Activated T-helper 2 cell treated with anti-CD3 and anti-CD28 coated beads, Interferon-gamma antibody, Interleukin-2, Interleukin-4, amounts not matched to agents 10 μg/mL and 5 μg/mL and 100 μg/mL, durations not matched to agents 14 hours and 24 hours and 36 hours (primary cell): ENCODE measurements at regions of chr4 and their contacts with region 1.

Region 1: GRCh38 chr4:150970685-150971151 is 44.4 kb downstream of the LRBA start:
- DNase-seq: no peak
- H3K4me3 Mint-ChIP-seq: no peak overlapping the region
- H3K27ac Mint-ChIP-seq: peak overlapping the region; percentile 68
- H3K4me1 Mint-ChIP-seq: peaks cover 40% of the 10 kb centered on the region
- H3K27me3 Mint-ChIP-seq: no peaks in the 10 kb centered on the region

Region 2: DNA sequence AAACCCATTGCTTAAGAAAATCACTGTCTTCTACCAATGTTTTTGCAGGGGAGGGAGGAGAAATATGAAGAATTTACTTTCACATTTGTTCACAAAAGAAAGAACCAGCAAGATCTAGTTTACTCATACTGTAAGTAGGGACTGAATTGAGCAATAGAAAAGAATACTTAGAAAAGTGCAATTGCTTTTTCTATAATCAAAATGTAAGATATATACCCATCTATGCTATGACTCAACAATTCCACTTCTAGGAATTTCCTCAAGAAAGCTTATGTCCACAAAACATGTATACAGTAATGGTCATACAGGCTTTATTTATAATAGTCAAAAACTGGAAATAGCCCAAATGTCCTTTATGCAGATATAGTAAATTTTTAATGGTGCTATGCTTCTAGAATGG is 152.1 kb before region 1 on chr4:
- intact Hi-C with region 1: loop called (anchors 5 kb)
- DNase-seq: no peak
- H3K4me3 Mint-ChIP-seq: no peak overlapping the region
- H3K27ac Mint-ChIP-seq: no peak overlapping the region
- H3K4me1 Mint-ChIP-seq: peaks cover 15% of the 10 kb centered on the region
- H3K27me3 Mint-ChIP-seq: no peaks in the 10 kb centered on the region

Region 3: GRCh38 chr4:150886599-150886998 is 84.1 kb before region 1 on chr4:
- intact Hi-C with region 1: no loop called
- DNase-seq: no peak
- H3K4me3 Mint-ChIP-seq: no peak overlapping the region
- H3K27ac Mint-ChIP-seq: no peak overlapping the region
- H3K4me1 Mint-ChIP-seq: peaks cover 18% of the 10 kb centered on the region
- H3K27me3 Mint-ChIP-seq: no peaks in the 10 kb centered on the region

Region 4: DNA sequence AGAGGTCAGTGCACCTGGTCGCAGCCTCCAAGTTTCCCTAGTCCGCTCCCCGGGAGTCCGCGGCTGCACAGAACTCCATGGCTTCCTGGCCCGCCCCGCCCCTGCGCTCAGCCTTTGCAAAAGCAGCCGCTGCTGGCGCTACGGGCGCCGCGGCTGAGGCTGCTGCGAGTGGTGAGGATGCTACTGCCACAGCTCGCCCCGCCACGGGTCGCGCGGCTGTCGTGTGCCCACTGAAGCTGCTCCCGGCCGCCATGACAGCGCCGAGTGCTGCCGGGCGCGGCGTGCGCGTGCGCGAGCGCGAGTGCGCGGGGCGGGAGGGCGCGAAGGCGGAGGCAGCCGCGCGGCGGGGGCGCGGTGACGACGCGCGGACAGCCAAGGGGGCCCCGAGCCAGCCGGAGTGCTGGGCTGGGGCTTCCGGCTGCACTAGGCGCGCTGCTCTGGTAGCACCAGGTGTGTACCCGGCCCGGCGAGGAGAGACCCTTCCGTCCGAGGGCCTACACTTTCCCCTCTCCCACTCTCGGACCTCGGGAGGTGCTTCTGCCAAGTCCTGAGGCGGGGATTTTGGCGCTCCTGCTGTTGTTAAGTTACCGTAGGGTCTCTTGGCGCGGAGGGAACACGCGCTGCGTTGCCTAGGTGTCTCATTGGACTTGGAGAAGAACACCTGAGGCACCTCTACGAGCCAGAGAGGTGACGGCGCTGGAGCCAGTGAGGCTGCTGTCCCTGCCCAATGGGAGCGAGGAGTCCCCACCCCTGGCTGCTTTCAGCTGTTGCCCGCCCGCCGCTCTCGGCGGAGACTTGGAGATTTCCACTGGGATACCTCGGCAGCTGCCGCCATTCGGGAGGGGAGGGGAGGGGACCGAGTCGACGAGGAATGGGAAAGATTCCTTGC is 45.0 kb after region 1 on chr4:
- intact Hi-C with region 1: loop called (anchors 1 kb)
- DNase-seq: peak; percentile 76
- H3K4me3 Mint-ChIP-seq: peak overlapping the region; percentile 100
- H3K27ac Mint-ChIP-seq: peak overlapping the region; percentile 99
- H3K4me1 Mint-ChIP-seq: peaks cover 16% of the 10 kb centered on the region
- H3K27me3 Mint-ChIP-seq: no peaks in the 10 kb centered on the region